ENCODE measurements at regions of chr6 and their contacts with region 1.

Region 1: GRCh38 chr6:33248925-33249731 is 22.5 kb downstream of the VPS52 start:
- DNase-seq: peak; percentile 90 to 100 (median 95)
- ATAC-seq: peak; percentile 85
- H3K4me3 ChIP-seq: peak overlapping the region; percentile 66 to 71
- H3K4me3 Mint-ChIP-seq: peak overlapping the region; percentile 91
- H3K27ac ChIP-seq: peak overlapping the region; percentile 85 to 98
- H3K27ac Mint-ChIP-seq: peak overlapping the region; percentile 93
- H3K4me1 ChIP-seq: peaks cover 25% of the 10 kb centered on the region
- H3K4me1 Mint-ChIP-seq: peaks cover 38% of the 10 kb centered on the region
- H3K27me3 ChIP-seq: peaks cover 0 to 3% of the 10 kb centered on the region in 2 experiments
- H3K27me3 Mint-ChIP-seq: no peaks in the 10 kb centered on the region
- CTCF ChIP-seq: no peak

Region 2: GRCh38 chr6:32894080-32895005 is 354.8 kb before region 1 on chr6:
- CTCF ChIA-PET with region 1: no interaction called
- POLR2A ChIA-PET with region 1: no interaction called
- intact Hi-C with region 1: loop called (anchors 2 to 10 kb)
- DNase-seq: peak; percentile 88 to 98 (median 95)
- ATAC-seq: peak; percentile 96
- H3K4me3 ChIP-seq: peak overlapping the region; percentile 89 to 92
- H3K4me3 Mint-ChIP-seq: peak overlapping the region; percentile 99
- H3K27ac ChIP-seq: peak overlapping the region; percentile 62 to 89
- H3K27ac Mint-ChIP-seq: peak overlapping the region; percentile 97
- H3K4me1 ChIP-seq: peaks cover 20% of the 10 kb centered on the region
- H3K4me1 Mint-ChIP-seq: peaks cover 46% of the 10 kb centered on the region
- H3K27me3 ChIP-seq: no peaks in the 10 kb centered on the region
- H3K27me3 Mint-ChIP-seq: no peaks in the 10 kb centered on the region
- CTCF ChIP-seq: no peak

Region 3: GRCh38 chr6:33123732-33124524 is 125.2 kb before region 1 on chr6:
- CTCF ChIA-PET with region 1: interaction called, 59 read pairs
- POLR2A ChIA-PET with region 1: interaction called, 11 read pairs
- intact Hi-C with region 1: loop called (anchors 1 kb)
- DNase-seq: peak in 2 of 9 experiments; percentile 35 to 49
- ATAC-seq: peak; percentile 52
- H3K4me3 ChIP-seq: no peak overlapping the region
- H3K4me3 Mint-ChIP-seq: no peak overlapping the region
- H3K27ac ChIP-seq: no peak overlapping the region
- H3K27ac Mint-ChIP-seq: no peak overlapping the region
- H3K4me1 ChIP-seq: no peaks in the 10 kb centered on the region
- H3K4me1 Mint-ChIP-seq: no peaks in the 10 kb centered on the region
- H3K27me3 ChIP-seq: no peaks in the 10 kb centered on the region
- H3K27me3 Mint-ChIP-seq: peaks cover 15% of the 10 kb centered on the region
- CTCF ChIP-seq: peak; percentile 47

Region 4: GRCh38 chr6:33200219-33201146 is 48.6 kb before region 1 on chr6 and contains the starts of genes RXRB and SLC39A7:
- CTCF ChIA-PET with region 1: interaction called, 51 read pairs
- POLR2A ChIA-PET with region 1: interaction called, 18 read pairs
- intact Hi-C with region 1: loop called (anchors 1 kb)
- DNase-seq: peak; percentile 97 to 100 (median 99)
- ATAC-seq: peak; percentile 75
- H3K4me3 ChIP-seq: peak within 1 kb of the TSS; percentile 77 to 85
- H3K4me3 Mint-ChIP-seq: peak within 1 kb of the TSS; percentile 98
- H3K27ac ChIP-seq: peak within 1 kb of the TSS; percentile 89 to 94
- H3K27ac Mint-ChIP-seq: peak within 1 kb of the TSS; percentile 99
- H3K4me1 ChIP-seq: peaks cover 57% of the 10 kb centered on the region
- H3K4me1 Mint-ChIP-seq: peaks cover 78% of the 10 kb centered on the region
- H3K27me3 ChIP-seq: no peaks in the 10 kb centered on the region
- H3K27me3 Mint-ChIP-seq: no peaks in the 10 kb centered on the region
- CTCF ChIP-seq: no peak
- total RNA-seq, gene RXRB: 39.2 to 40.0 TPM
- total RNA-seq, gene SLC39A7: 9.7 to 11.0 TPM

Region 5: GRCh38 chr6:33264015-33264414 is 14.9 kb after region 1 on chr6:
- CTCF ChIA-PET with region 1: interaction called, 29 read pairs
- POLR2A ChIA-PET with region 1: interaction called, 3 read pairs
- intact Hi-C with region 1: no loop called
- DNase-seq: no peak
- ATAC-seq: no peak
- H3K4me3 ChIP-seq: no peak overlapping the region
- H3K4me3 Mint-ChIP-seq: no peak overlapping the region
- H3K27ac ChIP-seq: no peak overlapping the region
- H3K27ac Mint-ChIP-seq: no peak overlapping the region
- H3K4me1 ChIP-seq: no peaks in the 10 kb centered on the region
- H3K4me1 Mint-ChIP-seq: peaks cover 8% of the 10 kb centered on the region
- H3K27me3 ChIP-seq: no peaks in the 10 kb centered on the region
- H3K27me3 Mint-ChIP-seq: no peaks in the 10 kb centered on the region
- CTCF ChIP-seq: no peak

Region 6: DNA sequence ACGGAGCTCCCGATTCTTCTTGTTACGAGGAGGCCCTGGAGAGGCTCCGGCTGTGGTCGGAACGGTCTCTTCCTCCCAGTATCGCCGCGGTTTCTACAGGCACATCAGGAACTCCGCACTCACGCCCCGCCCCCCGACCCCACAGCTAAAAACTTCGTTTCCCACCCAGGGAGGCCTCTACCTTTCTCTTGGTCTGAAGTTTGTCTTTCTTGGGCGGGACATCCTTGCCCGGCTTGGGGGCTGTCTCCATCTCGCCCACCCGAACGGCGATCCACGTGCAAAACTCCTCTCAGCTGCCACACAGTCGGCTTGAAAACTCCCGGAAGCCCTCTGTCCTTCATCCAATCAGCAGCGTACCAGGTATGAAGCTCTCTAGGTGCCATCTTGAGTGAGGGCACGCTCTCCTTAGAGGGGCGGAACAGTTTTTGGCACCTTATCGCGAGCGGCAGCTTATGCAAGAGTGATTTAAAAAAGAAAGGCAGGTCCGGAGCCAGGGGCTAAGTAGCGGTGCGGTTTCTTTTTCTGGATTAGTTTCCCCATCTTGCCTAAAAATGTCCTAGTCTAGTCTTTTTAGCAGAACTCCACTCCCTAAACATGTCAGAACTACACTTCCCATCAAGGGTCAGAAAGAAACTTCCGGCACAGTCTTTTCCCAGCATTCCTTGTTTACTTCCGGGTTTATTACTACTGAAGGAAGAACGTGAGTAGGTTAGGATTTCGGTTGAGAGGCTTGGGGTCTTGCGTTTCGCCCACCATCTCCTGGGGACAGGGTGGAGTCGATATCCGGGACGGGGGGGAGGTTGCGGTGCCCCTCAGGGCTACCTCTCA is 40.0 kb after region 1 on chr6 and contains the starts of genes PFDN6 and WDR46:
- CTCF ChIA-PET with region 1: no interaction called
- POLR2A ChIA-PET with region 1: interaction called, 4 read pairs
- intact Hi-C with region 1: loop called (anchors 1 kb)
- DNase-seq: peak; percentile 64 to 94 (median 84)
- ATAC-seq: peak; percentile 96
- H3K4me3 ChIP-seq: peak within 1 kb of the TSS; percentile 81 to 98
- H3K4me3 Mint-ChIP-seq: peak within 1 kb of the TSS; percentile 99
- H3K27ac ChIP-seq: peak within 1 kb of the TSS; percentile 59 to 82
- H3K27ac Mint-ChIP-seq: peak within 1 kb of the TSS; percentile 88
- H3K4me1 ChIP-seq: peaks cover 25% of the 10 kb centered on the region
- H3K4me1 Mint-ChIP-seq: peaks cover 41% of the 10 kb centered on the region
- H3K27me3 ChIP-seq: no peaks in the 10 kb centered on the region
- H3K27me3 Mint-ChIP-seq: no peaks in the 10 kb centered on the region
- CTCF ChIP-seq: no peak
- total RNA-seq, gene PFDN6: 9.4 to 11.2 TPM
- total RNA-seq, gene WDR46: 19.9 to 22.1 TPM

Region 7: GRCh38 chr6:33344701-33345697 is 95.9 kb after region 1 on chr6:
- CTCF ChIA-PET with region 1: interaction called, 3 read pairs
- POLR2A ChIA-PET with region 1: no interaction called
- intact Hi-C with region 1: loop called (anchors 1 kb)
- DNase-seq: peak; percentile 33 to 94 (median 70)
- ATAC-seq: peak; percentile 58
- H3K4me3 ChIP-seq: peak overlapping the region; percentile 40 to 53
- H3K4me3 Mint-ChIP-seq: peak overlapping the region; percentile 82
- H3K27ac ChIP-seq: peak overlapping the region; percentile 75 to 95
- H3K27ac Mint-ChIP-seq: peak overlapping the region; percentile 94
- H3K4me1 ChIP-seq: peaks cover 32% of the 10 kb centered on the region
- H3K4me1 Mint-ChIP-seq: peaks cover 42% of the 10 kb centered on the region
- H3K27me3 ChIP-seq: no peaks in the 10 kb centered on the region
- H3K27me3 Mint-ChIP-seq: no peaks in the 10 kb centered on the region
- CTCF ChIP-seq: peak; percentile 72

Measured in CD8-positive, alpha-beta T cell (primary cell).